Sigmoid colon (tissue), 7 donors: ENCODE measurements at regions of chr19 and their contacts with region 1.

Region 1: DNA sequence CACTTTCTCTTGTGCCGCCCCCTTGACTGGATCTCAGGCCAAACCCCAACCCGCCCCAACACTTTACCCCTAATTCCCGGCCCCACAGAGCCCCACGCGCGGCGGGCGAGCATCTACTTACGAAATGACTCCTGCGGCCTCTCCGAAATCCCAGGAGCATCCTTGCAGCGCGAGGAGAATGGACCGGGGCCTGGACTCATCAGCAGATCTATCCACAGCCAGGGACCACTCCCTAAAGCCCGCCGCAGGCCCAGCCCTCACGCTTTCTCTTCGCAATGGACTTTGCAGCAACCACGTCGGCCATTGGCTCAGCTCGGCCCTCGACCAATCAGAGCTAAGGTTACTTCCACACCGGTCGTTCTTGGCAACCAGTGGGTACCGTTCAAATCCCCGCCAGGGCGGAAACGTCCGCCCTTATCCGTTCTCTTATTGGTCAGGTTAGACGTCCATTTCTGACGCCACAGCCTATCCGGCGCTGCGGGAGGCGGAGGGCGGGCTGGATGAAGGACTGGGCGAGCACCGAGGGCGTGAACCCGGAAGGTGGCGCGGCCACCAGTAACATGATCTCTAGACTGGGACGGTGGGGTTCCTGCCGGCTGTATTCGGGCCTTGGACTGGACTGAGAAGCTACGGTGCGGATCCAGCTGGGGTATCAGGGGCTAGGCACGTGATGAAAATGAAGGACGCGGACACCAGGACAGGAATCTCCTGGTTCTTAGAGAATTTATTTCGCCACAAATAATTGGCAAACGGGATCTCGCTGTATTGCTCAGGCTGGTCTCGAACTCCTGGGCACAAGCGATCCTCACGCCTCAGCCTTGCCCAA is at the starts of genes CEP89 and FAAP24:
- DNase-seq: peak; percentile 99
- H3K4me3 ChIP-seq: peak within 1 kb of the TSS; percentile 61 to 99 (median 84)
- H3K27ac ChIP-seq: peak within 1 kb of the TSS; percentile 74 to 83 (median 78)
- H3K4me1 ChIP-seq: peaks cover 0 to 23% (median 20%) of the 10 kb centered on the region in 4 donors
- H3K27me3 ChIP-seq: no peaks in the 10 kb centered on the region
- CTCF ChIP-seq: no peak
- EP300 ChIP-seq: no peak
- POLR2A ChIP-seq: no peak
- total RNA-seq, gene CEP89: 11.1 to 17.5 (median 16.7) TPM
- total RNA-seq, gene FAAP24: 0.14 to 2.3 (median 1.8) TPM

Region 2: GRCh38 chr19:32809254-32809653 is 162.7 kb before region 1 on chr19:
- intact Hi-C with region 1: no loop called
- DNase-seq: no peak
- H3K4me3 ChIP-seq: no peak overlapping the region
- H3K27ac ChIP-seq: no peak overlapping the region
- H3K4me1 ChIP-seq: no peaks in the 10 kb centered on the region
- H3K27me3 ChIP-seq: no peaks in the 10 kb centered on the region
- CTCF ChIP-seq: no peak
- EP300 ChIP-seq: no peak
- POLR2A ChIP-seq: no peak

Region 3: DNA sequence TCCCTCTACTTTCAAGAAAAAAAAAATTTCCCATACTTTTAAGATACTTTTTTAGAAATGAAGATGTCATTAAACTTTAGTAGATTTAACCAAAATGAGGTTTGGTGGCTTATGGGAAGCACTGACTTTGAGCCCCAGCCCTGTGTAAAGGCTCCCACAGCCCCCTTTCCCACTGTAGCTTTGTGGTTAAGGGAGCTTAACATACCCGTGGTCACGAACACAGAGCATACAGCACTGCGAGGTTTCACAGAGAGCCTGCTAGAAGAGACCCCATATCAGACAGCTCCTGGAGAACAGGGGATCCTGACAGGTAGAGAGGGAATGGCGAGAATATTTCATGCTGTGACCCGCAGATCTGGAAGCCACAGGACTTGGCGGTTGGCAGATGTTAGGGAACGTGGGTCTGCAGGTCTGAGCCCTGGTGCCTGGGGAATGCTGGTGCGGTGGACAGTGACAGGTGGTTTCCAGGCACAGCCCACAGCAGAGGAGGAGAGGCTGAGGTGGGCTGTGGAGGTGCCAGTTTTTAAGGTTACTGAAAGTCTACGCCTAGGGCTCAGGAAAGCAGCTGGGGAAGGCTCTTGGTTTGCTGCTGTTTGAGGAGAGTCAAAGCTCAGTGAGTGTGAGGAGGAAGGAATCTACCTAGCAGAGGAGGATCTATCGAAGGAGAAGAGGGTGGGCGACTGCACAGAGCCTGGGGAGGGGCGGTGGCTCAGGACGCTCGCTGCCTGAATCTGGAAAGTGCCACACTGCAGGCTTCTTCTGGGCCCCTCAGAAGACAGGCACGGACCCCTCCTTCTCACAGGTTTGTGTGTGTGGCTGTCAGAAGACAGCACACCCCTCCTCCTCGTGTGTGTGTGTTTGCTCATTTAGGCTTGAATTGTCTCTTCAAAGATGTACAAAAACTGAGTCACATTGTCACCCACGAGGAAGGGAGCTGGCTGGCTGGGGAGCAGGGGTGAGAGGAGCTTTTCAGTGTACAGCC is 152.2 kb before region 1 on chr19:
- intact Hi-C with region 1: no loop called
- DNase-seq: peak; percentile 32
- H3K4me3 ChIP-seq: no peak overlapping the region
- H3K27ac ChIP-seq: no peak overlapping the region
- H3K4me1 ChIP-seq: no peaks in the 10 kb centered on the region
- H3K27me3 ChIP-seq: peaks cover 0 to 8% (median 0%) of the 10 kb centered on the region in 3 donors
- CTCF ChIP-seq: no peak
- EP300 ChIP-seq: no peak
- POLR2A ChIP-seq: no peak

Region 4: DNA sequence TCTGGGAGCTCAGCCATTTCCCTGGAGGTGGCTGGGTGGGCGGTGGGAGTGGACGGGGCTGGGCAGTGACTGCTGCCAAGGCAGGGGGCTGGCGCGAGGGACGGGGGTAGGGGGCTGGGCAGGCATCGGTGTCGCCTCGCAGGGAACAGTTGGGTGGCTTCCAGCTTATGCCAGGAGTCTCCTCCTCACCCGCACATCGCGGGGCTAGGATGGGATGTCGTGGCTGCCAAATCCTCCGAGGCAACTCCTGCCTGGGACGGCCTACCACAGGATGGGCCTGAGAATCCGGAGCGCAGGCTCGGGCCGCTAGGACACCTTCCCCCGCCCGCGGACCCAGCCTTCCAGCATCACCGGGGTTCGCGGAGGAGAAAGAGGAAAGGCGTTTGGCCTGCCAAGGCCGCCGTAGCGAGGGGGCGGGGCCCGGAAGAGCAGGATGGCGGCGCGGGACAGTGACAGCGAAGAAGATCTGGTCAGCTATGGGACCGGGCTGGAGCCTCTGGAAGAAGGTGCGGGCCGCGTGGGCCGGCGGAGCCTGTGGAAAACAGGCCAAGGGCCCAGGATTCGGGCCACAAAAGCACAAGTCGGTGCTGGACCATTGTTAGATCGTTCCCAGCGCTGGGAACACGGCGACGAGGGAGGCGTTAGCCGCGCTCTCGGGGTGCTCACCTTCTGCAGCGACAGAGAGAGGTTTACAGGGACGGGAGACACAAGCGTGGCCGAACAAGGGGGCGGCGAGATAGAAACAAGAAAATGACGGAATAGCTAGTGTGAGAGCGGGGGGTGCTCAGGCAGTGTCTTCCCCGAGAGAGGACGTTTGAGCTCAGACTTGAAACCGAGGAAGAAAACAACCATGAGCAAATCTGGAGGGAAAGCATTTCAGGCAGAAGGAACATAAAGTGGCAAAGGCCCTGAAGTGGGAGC is 109.1 kb after region 1 on chr19 and contains the start of gene GPATCH1:
- intact Hi-C with region 1: loop called (anchors 2 kb)
- DNase-seq: peak; percentile 92
- H3K4me3 ChIP-seq: peak within 1 kb of the TSS; percentile 74 to 94 (median 85)
- H3K27ac ChIP-seq: peak within 1 kb of the TSS; percentile 70 to 84 (median 80)
- H3K4me1 ChIP-seq: peaks cover 0 to 19% (median 14%) of the 10 kb centered on the region in 4 donors
- H3K27me3 ChIP-seq: no peaks in the 10 kb centered on the region
- CTCF ChIP-seq: no peak
- EP300 ChIP-seq: no peak
- POLR2A ChIP-seq: peak in 1 of 2 donors; percentile 26
- total RNA-seq, gene GPATCH1: 5.3 to 10.0 (median 7.4) TPM

Region 5: DNA sequence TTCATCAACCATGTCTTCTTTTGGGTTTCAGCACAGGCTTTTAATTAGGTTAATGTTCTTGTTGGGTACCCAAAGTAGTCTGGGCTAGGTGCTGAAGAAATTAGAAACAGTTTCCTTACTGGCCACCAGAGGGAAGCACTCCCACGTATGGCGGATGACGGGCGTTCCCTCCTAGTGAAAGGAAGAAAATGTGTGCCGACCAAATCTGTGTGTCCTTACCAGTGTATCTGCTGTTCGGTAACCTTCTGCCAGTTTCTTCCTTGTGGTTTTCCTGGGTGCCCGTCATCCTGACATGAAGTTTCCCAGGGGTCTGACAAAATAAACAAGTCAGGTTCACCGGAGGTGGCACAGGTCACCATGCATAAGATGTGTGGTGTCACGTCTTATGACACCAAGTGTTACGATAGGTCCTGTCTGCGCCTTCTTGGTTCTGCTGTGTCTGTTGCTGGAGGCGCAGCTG is 154.0 kb after region 1 on chr19:
- intact Hi-C with region 1: loop called (anchors 10 kb)
- DNase-seq: peak; percentile 74
- H3K4me3 ChIP-seq: no peak overlapping the region
- H3K27ac ChIP-seq: no peak overlapping the region
- H3K4me1 ChIP-seq: no peaks in the 10 kb centered on the region
- H3K27me3 ChIP-seq: no peaks in the 10 kb centered on the region
- CTCF ChIP-seq: peak in 3 of 4 experiments; percentile 65 to 83 (median 68)
- EP300 ChIP-seq: no peak
- POLR2A ChIP-seq: no peak